ENCODE measurements at regions of chr9 and their contacts with region 1.

Region 1: DNA sequence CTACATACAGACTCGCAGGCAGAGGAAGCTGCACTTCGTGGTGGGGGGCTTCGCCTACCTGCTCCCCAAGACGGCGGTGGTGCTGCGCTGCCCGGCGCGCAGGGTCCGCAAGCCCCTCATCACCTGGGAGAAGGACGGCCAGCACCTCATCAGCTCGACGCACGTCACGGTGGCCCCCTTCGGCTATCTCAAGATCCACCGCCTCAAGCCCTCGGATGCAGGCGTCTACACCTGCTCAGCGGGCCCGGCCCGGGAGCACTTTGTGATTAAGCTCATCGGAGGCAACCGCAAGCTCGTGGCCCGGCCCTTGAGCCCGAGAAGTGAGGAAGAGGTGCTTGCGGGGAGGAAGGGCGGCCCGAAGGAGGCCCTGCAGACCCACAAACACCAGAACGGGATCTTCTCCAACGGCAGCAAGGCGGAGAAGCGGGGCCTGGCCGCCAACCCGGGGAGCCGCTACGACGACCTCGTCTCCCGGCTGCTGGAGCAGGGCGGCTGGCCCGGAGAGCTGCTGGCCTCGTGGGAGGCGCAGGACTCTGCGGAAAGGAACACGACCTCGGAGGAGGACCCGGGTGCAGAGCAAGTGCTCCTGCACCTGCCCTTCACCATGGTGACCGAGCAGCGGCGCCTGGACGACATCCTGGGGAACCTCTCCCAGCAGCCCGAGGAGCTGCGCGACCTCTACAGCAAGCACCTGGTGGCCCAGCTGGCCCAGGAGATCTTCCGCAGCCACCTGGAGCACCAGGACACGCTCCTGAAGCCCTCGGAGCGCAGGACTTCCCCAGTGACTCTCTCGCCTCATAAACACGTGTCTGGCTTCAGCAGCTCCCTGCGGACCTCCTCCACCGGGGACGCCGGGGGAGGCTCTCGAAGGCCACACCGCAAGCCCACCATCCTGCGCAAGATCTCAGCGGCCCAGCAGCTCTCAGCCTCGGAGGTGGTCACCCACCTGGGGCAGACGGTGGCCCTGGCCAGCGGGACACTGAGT is 255.9 kb downstream of the SAXO1 start:
- H3K4me3 ChIP-seq: no peak overlapping the region
- H3K27ac ChIP-seq: no peak overlapping the region
- H3K4me1 ChIP-seq: no peaks in the 10 kb centered on the region
- CTCF ChIP-seq: no peak

Region 2: GRCh38 chr9:18756712-18757125 is 20.4 kb before region 1 on chr9:
- CTCF ChIA-PET with region 1: no interaction called
- POLR2A ChIA-PET with region 1: no interaction called
- H3K4me3 ChIP-seq: no peak overlapping the region
- H3K27ac ChIP-seq: no peak overlapping the region
- H3K4me1 ChIP-seq: no peaks in the 10 kb centered on the region
- CTCF ChIP-seq: no peak

Region 3: GRCh38 chr9:18791074-18791473 is 13.9 kb after region 1 on chr9:
- CTCF ChIA-PET with region 1: interaction called, 11 read pairs
- POLR2A ChIA-PET with region 1: no interaction called
- H3K4me3 ChIP-seq: no peak overlapping the region
- H3K27ac ChIP-seq: no peak overlapping the region
- H3K4me1 ChIP-seq: 0 out of 2 replicates have a peak, but pooled peaks cover 2% of the 10 kb centered on the region
- CTCF ChIP-seq: no peak

Region 4: DNA sequence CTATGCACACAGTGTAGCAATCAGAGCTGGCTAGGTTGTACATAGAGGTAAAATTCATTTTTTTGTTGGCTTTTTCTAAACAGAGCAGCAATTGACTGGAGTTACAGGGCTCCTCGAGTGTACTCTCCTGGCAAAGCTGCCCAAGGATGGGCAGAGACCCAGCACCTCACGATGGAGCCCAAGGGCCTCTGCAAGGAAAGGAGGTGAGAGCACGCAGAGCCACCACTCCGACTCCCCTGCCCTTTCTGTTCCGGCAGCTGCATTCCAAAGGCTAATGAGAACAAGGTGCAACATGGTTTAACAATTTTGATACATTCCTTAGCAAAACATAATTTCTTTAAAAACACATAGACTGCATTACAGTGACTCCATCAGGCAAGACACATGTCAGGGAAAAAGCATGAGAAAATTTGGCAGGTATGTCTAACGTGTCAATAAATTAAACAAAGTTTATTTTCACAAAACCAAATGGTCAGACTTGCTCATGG is 208.4 kb after region 1 on chr9:
- CTCF ChIA-PET with region 1: no interaction called
- POLR2A ChIA-PET with region 1: no interaction called
- H3K4me3 ChIP-seq: no peak overlapping the region
- H3K27ac ChIP-seq: no peak overlapping the region
- H3K4me1 ChIP-seq: peaks cover 7% of the 10 kb centered on the region
- CTCF ChIP-seq: no peak; the same call in 1 of the 2 replicates